ENCODE measurements at regions of chr5 and their contacts with region 1.

Region 1: GRCh38 chr5:111278845-111279504 is 54.8 kb downstream of the CAMK4 start:
- DNase-seq: peak; percentile 74
- H3K4me3 Mint-ChIP-seq: no peak overlapping the region
- H3K27ac Mint-ChIP-seq: no peak overlapping the region
- H3K4me1 Mint-ChIP-seq: no peaks in the 10 kb centered on the region
- H3K27me3 Mint-ChIP-seq: peaks cover 18% of the 10 kb centered on the region
- CTCF ChIP-seq: peak; percentile 84

Region 2: DNA sequence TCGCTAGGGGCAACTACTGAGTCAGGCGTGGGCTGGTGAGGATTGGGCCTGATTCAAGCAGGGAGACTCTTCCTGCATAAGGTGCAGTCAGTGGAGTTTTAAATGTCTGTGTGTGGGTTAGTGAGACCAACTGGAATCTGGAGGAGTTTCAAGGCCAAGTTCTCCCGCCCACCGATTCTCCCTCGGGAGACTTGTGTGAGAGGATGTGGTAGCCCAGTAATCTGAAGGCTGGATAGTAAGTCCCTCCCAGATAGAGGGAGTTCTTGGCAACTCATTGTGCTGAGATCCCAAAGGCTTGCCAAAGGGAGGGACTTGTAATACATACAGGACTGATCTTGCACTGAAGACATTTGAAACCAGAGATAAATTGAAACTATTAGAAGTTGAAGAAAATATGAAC is 135.1 kb before region 1 on chr5:
- CTCF ChIA-PET with region 1: interaction called, 12 read pairs
- POLR2A ChIA-PET with region 1: no interaction called
- intact Hi-C with region 1: no loop called
- DNase-seq: peak; percentile 87
- H3K4me3 Mint-ChIP-seq: no peak overlapping the region
- H3K27ac Mint-ChIP-seq: no peak overlapping the region
- H3K4me1 Mint-ChIP-seq: peaks cover 9% of the 10 kb centered on the region
- H3K27me3 Mint-ChIP-seq: no peaks in the 10 kb centered on the region
- CTCF ChIP-seq: no peak

Region 3: DNA sequence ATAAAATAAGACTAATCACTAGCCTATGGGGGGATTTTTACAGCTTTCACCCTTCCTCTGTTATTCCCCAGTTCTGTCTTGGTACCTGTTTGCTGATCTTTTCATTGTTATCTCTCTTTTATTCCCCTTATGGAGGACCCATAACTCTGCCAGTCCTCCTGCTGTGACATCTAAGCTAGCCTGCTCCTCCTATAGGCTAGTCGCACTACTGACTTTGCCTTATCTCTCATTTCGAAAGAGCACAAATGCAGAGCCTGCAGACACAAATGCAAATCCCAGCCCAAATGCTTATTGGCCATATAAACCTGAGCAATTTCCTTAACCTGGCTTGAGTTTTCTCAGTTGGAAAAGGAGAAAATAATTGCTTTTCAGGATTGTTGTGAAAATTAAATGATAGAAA is 113.9 kb before region 1 on chr5:
- CTCF ChIA-PET with region 1: interaction called, 104 read pairs
- POLR2A ChIA-PET with region 1: interaction called, 3 read pairs
- intact Hi-C with region 1: no loop called
- DNase-seq: no peak
- H3K4me3 Mint-ChIP-seq: no peak overlapping the region
- H3K27ac Mint-ChIP-seq: no peak overlapping the region
- H3K4me1 Mint-ChIP-seq: no peaks in the 10 kb centered on the region
- H3K27me3 Mint-ChIP-seq: peaks cover 6% of the 10 kb centered on the region
- CTCF ChIP-seq: no peak

Region 4: DNA sequence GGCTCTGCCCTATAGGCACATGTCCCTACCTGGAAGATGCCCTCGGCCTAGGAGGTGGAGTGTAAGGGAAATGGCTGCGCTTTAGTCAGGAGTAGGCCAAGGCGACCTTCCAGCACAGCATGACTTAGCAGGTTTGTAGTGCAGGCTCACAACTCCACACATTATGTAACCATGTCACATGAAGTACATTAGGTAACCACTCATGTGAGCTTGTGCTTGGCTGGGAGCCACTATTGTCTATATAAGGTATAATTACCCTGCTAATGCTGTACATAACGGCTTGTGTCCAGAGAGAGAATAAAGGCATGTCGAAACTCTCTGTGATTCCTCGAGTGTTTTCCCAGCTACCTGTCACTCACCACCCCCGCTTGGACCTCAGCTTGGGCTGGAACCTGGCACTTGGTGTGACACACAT is 20.1 kb after region 1 on chr5:
- CTCF ChIA-PET with region 1: interaction called, 10 read pairs
- POLR2A ChIA-PET with region 1: no interaction called
- intact Hi-C with region 1: no loop called
- DNase-seq: peak; percentile 60
- H3K4me3 Mint-ChIP-seq: no peak overlapping the region
- H3K27ac Mint-ChIP-seq: no peak overlapping the region
- H3K4me1 Mint-ChIP-seq: no peaks in the 10 kb centered on the region
- H3K27me3 Mint-ChIP-seq: no peaks in the 10 kb centered on the region
- CTCF ChIP-seq: no peak

Region 5: DNA sequence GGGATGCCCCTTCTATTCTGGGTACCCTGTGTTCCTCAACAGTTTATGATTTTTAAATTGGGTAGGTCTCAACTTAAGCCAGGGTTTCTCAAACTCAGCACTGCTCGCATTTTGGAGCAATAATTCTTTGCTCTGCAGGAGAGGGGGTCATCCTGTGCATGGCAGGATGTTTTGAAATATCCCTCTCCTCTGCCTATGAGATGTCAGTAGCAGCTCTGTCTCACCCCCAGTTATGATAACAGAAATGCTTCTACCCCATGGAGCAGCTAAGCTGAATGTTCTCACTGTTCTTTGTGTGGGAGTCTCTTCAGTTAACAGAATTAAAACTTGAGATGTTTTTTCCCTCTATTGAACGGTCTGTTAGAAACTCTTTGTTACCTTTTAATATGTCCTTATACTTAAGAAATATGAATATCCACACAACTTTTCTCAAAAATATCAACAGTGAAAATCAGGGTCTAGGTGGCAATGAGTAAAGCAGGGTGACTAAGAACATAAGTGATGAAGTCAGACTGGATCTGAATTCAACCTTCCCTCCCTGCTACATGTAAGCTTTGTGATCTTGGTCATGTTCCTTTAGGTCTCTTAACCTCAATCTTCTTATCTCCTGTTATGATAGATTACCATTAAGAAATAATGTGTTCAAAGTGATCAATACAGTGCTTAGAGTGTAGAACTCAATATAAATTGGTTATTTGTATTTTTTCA is 34.2 kb after region 1 on chr5:
- CTCF ChIA-PET with region 1: no interaction called
- POLR2A ChIA-PET with region 1: no interaction called
- intact Hi-C with region 1: no loop called
- DNase-seq: no peak
- H3K4me3 Mint-ChIP-seq: no peak overlapping the region
- H3K27ac Mint-ChIP-seq: no peak overlapping the region
- H3K4me1 Mint-ChIP-seq: no peaks in the 10 kb centered on the region
- H3K27me3 Mint-ChIP-seq: peaks cover 40% of the 10 kb centered on the region
- CTCF ChIP-seq: no peak

Region 6: GRCh38 chr5:111364992-111365391 is 86.0 kb after region 1 on chr5:
- CTCF ChIA-PET with region 1: no interaction called
- POLR2A ChIA-PET with region 1: no interaction called
- intact Hi-C with region 1: no loop called
- DNase-seq: peak; percentile 30
- H3K4me3 Mint-ChIP-seq: no peak overlapping the region
- H3K27ac Mint-ChIP-seq: no peak overlapping the region
- H3K4me1 Mint-ChIP-seq: peaks cover 13% of the 10 kb centered on the region
- H3K27me3 Mint-ChIP-seq: no peaks in the 10 kb centered on the region
- CTCF ChIP-seq: no peak

Region 7: GRCh38 chr5:111472579-111472978 is 193.6 kb after region 1 on chr5:
- CTCF ChIA-PET with region 1: interaction called, 4 read pairs
- POLR2A ChIA-PET with region 1: interaction called, 3 read pairs
- intact Hi-C with region 1: loop called (anchors 10 kb)
- DNase-seq: no peak
- H3K4me3 Mint-ChIP-seq: no peak overlapping the region
- H3K27ac Mint-ChIP-seq: no peak overlapping the region
- H3K4me1 Mint-ChIP-seq: peaks cover 6% of the 10 kb centered on the region
- H3K27me3 Mint-ChIP-seq: no peaks in the 10 kb centered on the region
- CTCF ChIP-seq: no peak

Region 8: DNA sequence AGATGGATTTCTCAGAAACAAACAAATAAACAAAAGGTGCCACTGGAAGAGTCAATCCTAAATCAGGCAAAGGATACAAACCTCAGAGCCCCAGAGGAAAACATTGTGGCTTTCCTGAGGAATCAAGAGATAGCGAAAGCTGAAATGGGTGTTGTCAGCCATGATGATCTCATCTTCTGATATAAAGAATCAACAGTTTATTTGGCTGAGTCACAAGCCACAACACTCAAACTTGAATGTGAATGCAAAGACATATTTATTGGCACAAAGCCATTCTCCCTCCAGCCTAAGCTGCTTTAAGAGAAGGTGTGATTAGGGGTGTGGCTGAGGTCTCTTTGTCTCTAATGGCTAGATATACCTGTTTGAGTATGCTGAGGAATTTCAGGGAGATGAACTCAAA is 551.4 kb after region 1 on chr5:
- CTCF ChIA-PET with region 1: no interaction called
- POLR2A ChIA-PET with region 1: no interaction called
- intact Hi-C with region 1: no loop called
- DNase-seq: peak; percentile 94
- H3K4me3 Mint-ChIP-seq: no peak overlapping the region
- H3K27ac Mint-ChIP-seq: peak overlapping the region; percentile 73
- H3K4me1 Mint-ChIP-seq: peaks cover 27% of the 10 kb centered on the region
- H3K27me3 Mint-ChIP-seq: no peaks in the 10 kb centered on the region
- CTCF ChIP-seq: no peak